ENCODE measurements at regions of chr19 and their contacts with region 1.

Region 1: DNA sequence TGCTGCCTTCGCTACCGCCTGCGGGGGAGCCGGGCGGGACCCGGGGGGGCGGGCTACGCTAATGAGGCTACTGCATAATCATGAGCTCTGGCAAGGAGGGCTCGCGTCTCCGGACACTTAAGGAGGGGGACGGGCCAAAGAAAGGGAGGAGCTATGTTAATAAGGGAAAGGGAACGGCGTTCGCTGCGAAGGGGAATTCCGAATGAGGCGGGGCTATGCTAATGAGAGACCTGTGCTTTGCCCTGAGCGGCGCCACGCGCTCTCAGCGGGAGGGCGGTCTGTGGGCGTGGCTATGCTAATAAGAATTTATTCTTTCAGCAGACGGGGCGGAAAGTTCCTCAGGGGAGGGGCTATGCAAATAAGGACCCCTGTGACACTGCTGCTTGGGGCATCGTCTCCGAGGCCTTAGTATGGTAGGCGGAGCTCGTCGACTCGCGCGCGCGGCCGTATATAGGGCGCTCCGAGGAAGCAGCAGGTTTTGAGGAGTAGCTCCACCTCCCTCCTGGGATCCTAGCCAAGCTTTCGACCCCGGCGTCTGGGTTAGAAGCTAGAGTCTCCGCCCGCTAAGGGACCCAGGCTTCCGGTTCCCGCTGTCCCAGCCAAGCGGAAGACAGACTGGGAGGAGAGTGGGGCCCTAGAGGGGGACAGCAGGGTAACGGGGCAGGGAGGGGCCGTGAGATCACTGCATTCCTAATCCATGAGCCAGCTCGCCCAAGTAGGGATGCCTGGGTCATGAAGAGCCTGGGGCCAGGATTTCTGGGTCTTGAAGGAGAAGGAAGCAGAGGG is at the start of gene RRAS:
- DNase-seq: peak; percentile 95 to 100 (median 99)

Region 2: GRCh38 chr19:49590071-49590970 is 50.0 kb before region 1 on chr19:
- intact Hi-C with region 1: loop called (anchors 2 kb)
- DNase-seq: peak; percentile 63 to 99 (median 88)

Region 3: DNA sequence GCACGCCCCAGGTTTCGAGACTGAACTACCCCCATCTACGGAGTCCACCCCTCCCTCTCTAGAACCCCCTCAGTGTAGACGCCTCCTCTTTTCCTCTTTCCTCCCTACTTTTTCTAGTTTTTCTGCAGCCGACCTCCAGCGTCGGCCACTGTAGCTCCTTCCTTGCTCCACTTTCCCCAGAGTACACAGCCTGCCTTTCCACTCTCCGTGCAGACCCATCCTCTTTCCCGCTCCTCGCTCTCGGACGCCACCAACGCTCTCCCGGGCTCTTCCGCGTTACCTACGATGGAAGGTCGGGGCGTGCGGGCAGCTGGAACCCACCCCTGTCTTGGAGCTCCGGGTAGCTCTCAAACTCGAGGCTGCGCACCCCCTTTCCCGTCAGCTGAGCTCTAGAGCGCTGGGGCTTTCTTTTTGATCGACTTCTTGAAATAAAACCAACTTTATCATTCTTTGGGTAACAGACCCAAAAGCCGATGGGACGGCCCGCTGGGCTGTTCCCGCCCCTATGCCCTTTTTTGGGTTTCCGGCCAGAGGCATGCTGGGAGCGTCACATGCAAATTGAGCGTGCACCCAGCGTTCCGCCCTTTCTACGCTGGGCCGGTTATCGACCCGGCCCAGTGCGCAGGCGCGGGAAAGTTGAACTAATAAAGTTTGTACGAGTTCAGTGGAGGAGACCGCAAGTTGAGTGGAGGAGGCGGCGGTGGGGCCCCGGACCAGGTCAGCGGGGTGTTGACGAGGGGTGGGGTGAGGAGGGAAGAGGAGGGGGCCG is 25.2 kb after region 1 on chr19 and contains the starts of genes BCL2L12 and IRF3:
- intact Hi-C with region 1: loop called (anchors 2 kb)
- DNase-seq: peak; percentile 94 to 99 (median 96)

Region 4: DNA sequence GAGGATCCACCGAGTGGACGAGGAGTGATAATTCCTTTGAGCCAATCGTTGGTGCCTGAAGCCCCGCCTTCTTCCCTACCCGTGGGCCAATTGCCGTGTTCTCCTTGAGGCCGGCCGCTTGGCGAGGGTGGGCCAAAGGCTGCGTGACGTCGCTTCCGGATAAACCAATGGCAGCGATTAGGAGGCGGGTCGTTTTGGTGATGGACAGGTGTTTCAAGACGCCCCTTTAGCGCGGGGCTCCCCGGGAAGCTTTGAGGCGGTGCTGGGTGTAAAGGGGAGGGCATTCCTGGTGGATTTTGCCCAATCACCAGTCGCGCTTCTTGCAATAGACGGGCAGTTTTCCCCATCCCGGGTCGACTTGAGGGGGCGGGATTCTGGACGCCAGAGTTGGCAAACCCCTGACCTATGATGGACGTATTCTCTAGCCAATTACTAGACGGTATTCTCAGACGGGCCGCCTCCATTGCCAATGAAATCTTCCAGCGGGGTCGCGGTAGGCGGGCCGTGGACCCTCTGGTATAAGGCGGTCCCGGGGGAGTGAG is 36.5 kb after region 1 on chr19:
- intact Hi-C with region 1: loop called (anchors 5 kb)
- DNase-seq: peak; percentile 99 to 100 (median 100)

Region 5: GRCh38 chr19:49746206-49747091 is 106.1 kb after region 1 on chr19:
- intact Hi-C with region 1: no loop called
- DNase-seq: peak in 3 of 10 donors; percentile 35 to 90 (median 85)

Measured in posterior cingulate gyrus (tissue), 11 donors.